Psoas muscle (tissue), 8 donors: ENCODE measurements at regions of chr9 and their contacts with region 1.

Region 1: DNA sequence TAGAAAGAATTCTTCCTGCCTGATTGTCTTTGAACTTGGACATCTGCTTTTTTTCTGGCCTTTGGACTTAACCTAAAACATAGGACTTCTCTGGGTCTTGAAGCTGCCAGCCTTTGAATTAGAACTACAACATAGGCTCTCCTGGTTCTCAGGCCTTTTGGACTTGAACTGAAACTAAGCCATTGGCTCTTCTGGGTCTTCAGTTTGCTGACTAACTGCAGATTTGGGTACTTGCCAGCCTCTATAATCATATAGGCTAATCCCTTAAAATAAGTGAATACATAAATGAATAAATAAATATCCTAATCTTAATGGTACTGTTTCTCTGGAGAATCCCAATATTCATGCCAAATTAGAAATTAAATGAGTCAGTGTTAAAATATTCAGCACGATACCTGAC is 473.4 kb upstream of the PAPPA start:
- DNase-seq: no peak
- ATAC-seq: no peak
- H3K4me3 ChIP-seq: no peak overlapping the region
- H3K27ac ChIP-seq: no peak overlapping the region
- H3K4me1 ChIP-seq: no peaks in the 10 kb centered on the region
- H3K27me3 ChIP-seq: no peaks in the 10 kb centered on the region
- CTCF ChIP-seq: no peak

Region 2: DNA sequence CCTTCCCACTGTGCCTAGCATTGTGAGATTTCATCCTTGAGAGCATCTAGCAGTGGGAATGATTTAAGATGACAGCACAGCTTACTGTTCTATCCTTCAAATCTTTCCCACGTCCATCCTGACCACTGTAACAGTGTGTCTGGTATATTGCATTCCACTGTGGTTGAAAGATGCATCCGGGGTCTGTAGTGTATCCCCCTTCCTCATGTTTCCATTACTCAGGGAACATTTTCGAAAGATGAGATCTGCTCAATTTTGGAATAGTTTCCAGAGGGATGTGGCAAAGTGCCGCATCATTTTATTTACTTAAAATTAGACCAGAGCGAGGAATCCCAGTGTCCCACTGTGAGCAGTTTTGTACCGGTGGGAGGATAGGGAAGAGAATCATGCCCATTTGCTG is 66.3 kb after region 1 on chr9:
- intact Hi-C with region 1: loop called in 1 of 2 experiments (anchors 10 kb)
- DNase-seq: no peak
- ATAC-seq: no peak
- H3K4me3 ChIP-seq: no peak overlapping the region
- H3K27ac ChIP-seq: no peak overlapping the region
- H3K4me1 ChIP-seq: no peaks in the 10 kb centered on the region
- H3K27me3 ChIP-seq: no peaks in the 10 kb centered on the region
- CTCF ChIP-seq: no peak